Calu3 (cell line): ENCODE measurements at regions of chr16 and their contacts with region 1.

Region 1: DNA sequence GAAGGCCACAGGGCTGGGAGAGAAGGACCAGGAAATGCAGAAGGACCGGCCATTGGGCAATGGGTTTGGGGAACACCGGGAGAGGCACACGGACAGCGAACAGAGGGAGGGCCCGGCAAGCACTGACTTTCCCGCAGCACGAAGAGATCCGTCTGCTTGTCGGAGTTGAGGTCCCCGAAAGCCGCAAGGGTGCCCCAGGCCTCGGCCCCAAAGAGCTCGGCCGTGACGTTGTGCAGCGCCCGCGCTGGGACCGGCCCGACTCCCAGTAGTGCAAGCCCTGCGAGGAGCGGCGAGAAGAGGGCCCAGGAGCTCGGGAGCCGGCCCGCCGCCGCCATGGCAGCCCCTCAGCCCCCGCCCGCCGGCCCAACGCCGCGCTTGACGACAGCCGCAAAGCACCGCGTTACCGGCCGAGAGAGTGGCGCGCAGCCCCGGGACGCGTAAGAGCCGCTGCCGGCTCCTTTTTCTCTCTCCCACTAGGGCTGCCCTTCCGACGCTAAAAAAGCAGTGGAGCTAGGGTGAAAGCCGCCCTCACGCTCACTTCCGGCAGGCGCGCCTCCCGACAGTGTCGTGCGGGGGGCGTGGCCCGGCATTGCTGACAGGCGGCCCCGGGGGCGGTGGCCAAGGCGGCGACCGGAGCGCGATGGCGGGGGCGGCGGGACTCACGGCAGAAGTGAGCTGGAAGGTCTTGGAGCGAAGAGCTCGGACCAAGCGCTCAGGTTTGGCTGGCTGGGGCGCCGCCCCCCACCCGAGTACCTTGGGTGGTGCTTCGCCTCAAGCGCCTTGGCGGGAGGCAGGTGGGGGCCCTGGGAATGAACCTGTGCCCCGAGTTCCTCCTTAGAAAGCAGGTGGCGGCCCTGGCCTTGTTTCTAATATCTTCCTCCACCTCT is at the starts of genes ITFG1 and PHKB:
- DNase-seq: peak; percentile 98
- H3K4me3 Mint-ChIP-seq: peak within 1 kb of the TSS; percentile 88
- H3K27ac Mint-ChIP-seq: peak within 1 kb of the TSS; percentile 97
- H3K4me1 Mint-ChIP-seq: peaks cover 18% of the 10 kb centered on the region
- H3K27me3 Mint-ChIP-seq: no peaks in the 10 kb centered on the region
- CTCF ChIP-seq: no peak
- total RNA-seq, gene ITFG1: 65.5 and 68.6 TPM in 2 replicates
- total RNA-seq, gene PHKB: 80.4 and 83.4 TPM in 2 replicates

Region 2: GRCh38 chr16:47180073-47180472 is 280.9 kb before region 1 on chr16:
- CTCF ChIA-PET with region 1: no interaction called
- intact Hi-C with region 1: no loop called
- DNase-seq: no peak
- H3K4me3 Mint-ChIP-seq: no peak overlapping the region
- H3K27ac Mint-ChIP-seq: no peak overlapping the region
- H3K4me1 Mint-ChIP-seq: no peaks in the 10 kb centered on the region
- H3K27me3 Mint-ChIP-seq: no peaks in the 10 kb centered on the region
- CTCF ChIP-seq: no peak

Region 3: DNA sequence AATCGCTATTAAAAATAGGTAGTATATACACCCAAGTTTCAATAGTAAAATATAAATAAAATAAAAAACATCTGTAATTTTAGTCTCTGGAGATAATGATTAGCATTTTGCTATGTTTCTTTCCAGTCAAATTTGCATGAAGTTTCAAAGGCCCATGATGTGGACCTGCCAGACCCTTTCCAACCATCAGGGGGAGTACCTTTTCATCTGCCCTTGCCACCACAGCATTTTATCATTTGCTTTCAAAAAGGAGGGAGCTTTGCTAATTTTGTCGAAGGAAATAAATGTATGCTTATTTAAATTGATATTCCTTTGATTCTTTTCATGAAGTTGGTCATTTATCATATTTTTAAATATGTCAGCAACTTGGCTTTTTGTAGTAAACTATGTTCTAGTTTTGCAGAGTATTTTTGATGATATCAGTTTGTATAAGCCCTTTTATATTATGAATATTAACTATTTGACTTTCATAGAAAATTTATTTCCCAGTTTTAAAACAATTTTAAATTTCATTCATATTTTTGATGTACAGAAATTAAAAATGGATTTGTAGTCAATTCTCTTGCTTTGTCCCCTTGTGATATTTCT is 202.0 kb before region 1 on chr16:
- CTCF ChIA-PET with region 1: no interaction called
- intact Hi-C with region 1: loop called (anchors 5 kb)
- DNase-seq: peak; percentile 35
- H3K4me3 Mint-ChIP-seq: no peak overlapping the region
- H3K27ac Mint-ChIP-seq: no peak overlapping the region
- H3K4me1 Mint-ChIP-seq: no peaks in the 10 kb centered on the region
- H3K27me3 Mint-ChIP-seq: no peaks in the 10 kb centered on the region
- CTCF ChIP-seq: peak; percentile 55

Region 4: GRCh38 chr16:47949714-47950113 is 488.8 kb after region 1 on chr16:
- CTCF ChIA-PET with region 1: no interaction called
- intact Hi-C with region 1: no loop called
- DNase-seq: no peak
- H3K4me3 Mint-ChIP-seq: no peak overlapping the region
- H3K27ac Mint-ChIP-seq: no peak overlapping the region
- H3K4me1 Mint-ChIP-seq: no peaks in the 10 kb centered on the region
- H3K27me3 Mint-ChIP-seq: peaks cover 57% of the 10 kb centered on the region
- CTCF ChIP-seq: no peak